Dendritic cell treated with granulocyte-macrophage colony-stimulating factor and Interleukin-4, amounts not matched to agents 40 ng/mL and 50 ng/mL, for 4 days (primary cell): ENCODE measurements at regions of chr5 and their contacts with region 1.

Region 1: DNA sequence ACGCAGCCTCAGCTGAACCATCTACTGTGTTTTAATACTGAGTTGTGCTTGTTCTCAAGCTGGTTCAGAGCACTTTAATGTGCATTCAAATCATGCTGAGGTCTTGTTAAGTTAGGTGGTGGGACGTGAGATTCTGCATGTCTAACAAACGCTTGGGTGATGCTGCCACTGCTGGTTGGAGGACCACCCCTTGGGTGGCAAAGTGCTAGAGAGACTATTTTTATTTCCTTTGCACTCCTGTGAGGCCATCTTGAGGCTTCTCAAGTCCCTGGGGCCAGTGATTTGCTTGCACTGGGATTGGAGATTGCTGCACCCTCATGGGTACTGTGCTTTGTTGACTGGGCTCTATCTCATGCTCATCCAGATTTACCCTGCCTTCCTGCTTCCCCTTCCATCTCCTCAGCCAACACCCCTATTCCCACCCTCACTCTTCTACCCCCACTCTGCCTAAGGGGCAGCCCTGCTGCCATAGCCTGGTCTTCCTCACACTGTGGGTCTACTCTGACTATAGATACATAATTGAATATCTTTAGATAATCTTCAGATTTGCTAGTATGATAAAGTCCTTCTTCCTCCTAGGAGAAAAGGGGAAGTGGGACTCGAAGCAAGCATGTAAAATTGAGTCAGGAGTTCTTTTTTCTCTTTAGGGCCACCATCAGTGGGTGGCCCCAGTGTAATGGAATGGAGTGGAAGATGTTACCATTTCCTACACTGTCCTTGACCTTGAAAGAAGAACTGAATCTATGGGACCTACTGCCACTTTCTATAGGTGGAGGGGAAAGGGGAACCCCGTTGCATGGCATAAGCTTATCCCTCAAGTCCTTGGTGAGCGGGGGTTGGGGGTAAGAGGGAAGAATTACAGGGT is 45.1 kb upstream of the SUB1 start:
- H3K4me3 Mint-ChIP-seq: peak overlapping the region; percentile 14
- H3K27ac Mint-ChIP-seq: peak overlapping the region; percentile 90
- H3K4me1 Mint-ChIP-seq: peaks cover 75% of the 10 kb centered on the region
- H3K27me3 Mint-ChIP-seq: no peaks in the 10 kb centered on the region

Region 2: DNA sequence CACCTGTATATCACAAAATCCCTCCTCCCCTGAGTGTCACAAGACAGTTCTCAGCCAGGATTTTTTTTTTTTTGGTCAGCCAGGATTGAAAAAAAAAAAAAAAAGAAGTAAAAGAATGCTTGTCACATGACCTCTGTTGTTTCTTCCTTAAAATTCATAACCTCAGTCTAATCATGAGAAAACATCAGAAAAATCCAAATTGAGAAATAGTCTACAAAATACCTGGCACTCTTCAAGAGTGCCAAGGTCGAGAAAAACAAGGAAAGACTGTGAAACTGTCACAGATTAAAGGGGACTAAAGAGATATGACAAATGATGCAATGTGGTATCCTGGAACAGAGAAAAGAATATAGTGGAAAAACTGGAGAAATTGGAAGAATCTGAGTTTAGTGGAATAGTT is 13.4 kb before region 1 on chr5:
- intact Hi-C with region 1: loop called (anchors 2 kb)
- H3K4me3 Mint-ChIP-seq: no peak overlapping the region
- H3K27ac Mint-ChIP-seq: peak overlapping the region; percentile 73
- H3K4me1 Mint-ChIP-seq: peaks cover 50% of the 10 kb centered on the region
- H3K27me3 Mint-ChIP-seq: peaks cover 3% of the 10 kb centered on the region

Region 3: DNA sequence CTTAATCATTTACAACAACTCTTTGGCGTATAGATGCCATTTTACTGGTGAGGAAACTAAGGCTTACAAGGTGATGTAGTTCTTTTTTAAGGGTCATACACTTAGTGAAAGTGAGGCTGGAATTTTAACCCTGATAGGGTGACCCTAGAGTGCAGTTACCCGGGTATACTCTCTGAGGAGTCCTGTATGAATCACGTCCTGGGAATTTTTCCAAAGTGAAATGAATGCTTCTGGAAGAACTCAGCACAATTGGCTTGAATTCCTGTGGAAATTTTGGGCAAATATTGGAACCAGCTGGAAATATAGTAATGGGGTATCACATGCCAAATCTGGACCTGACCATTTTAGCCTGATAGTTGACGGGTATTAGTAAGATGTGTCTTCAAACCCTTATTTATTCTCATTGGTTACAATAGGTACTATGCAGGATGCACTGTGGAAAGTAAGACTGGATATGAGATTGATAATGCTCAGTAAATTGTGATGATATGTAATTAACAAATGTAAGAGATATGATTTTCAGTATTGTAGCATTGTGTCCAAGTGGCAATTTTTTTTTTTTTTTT is 59.9 kb after region 1 on chr5:
- intact Hi-C with region 1: no loop called
- H3K4me3 Mint-ChIP-seq: no peak overlapping the region
- H3K27ac Mint-ChIP-seq: no peak overlapping the region
- H3K4me1 Mint-ChIP-seq: peaks cover 33% of the 10 kb centered on the region
- H3K27me3 Mint-ChIP-seq: no peaks in the 10 kb centered on the region